Posterior vena cava (tissue), 2 donors: ENCODE measurements at regions of chr1 and their contacts with region 1.

Region 1: DNA sequence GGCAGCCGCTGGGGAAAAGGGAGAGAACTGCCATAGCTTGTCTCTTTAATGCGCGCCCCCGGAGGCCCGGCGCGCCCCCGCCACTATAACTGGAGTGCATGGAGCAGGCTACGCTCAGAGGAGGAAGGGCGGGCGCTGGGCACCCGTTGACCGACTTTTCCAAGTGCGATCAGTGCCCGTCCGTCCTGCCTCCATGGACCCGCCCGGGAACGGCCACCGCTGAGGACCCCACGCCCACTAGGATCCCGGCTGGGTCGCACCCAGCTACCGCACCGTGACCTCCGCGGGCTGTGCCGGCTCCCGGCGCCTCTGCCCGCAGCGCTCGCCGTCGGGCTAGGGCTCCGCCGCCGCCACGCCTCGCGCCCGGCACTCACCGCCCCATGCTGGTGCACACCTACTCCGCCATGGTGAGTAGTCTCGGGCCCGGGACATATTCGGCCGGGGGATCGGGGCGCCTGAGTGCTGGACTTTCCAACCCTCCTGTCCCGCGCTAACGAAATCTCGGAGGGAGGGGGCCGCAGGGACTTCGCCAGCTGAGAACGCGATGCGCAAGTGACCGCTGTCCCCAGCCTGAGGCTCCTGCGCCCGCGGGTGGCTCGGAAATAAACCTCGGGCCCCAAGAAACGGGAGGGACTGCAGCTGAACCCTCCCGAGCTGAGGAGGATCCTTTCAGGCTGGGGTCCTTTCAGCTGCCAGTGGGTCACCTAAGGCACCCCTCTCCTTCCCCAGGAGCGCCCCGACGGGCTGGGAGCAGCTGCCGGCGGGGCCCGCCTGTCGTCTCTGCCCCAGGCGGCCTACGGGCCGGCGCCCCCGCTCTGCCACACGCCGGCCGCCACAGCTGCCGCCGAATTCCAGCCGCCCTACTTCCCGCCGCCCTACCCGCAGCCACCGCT is at the start of gene TFAP2E:
- DNase-seq: peak; percentile 85
- total RNA-seq, gene TFAP2E: 0.65 to 0.81 TPM

Region 2: DNA sequence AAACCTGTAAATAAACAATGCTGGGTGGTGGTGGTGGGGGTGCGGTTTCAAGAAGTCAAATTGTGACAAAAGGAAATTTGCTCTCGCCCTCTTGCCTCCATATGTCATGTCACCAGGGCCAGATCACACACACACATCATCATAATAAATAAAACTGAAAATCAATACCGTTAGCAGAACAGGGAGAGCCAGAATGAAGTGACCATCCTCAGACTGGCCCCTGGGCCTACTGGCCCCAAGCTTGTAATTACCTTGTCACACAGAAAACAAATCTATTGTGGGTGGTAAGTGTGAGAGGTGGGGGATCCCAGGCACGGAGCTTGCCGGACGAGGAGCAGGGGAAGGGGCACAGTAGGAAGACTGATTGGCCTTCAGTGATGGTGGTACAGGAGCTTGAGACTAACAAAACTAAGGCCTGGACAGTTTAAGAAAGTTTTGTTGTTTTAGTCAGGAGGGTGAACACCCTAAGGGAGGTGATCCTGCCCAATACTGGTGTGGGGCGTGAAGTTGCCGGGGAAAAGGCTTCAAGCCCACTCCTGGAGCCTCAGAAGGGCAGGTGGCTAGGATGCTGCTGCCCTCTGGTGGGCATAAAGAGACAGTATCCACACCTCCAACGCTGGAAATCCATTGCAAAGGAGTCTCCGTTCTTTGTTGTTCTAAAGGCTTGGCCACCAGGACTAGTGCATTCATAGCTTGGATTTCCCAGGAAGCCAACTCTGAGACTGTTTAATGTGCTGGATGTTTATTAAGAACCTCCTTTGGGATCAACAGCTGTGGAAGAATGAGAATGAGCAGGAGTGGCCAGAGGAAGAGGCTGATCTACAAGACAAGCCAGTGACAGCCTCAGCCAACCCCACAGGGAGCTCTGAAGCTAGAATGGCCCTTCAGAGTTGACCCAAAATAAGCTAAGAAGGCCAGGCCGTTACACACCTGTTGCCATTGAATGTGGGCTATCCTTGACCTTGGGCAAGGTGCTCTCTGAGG is 153.3 kb after region 1 on chr1:
- intact Hi-C with region 1: loop called (anchors 5 kb)
- DNase-seq: no peak

Region 3: GRCh38 chr1:35763201-35763600 is 189.8 kb after region 1 on chr1:
- intact Hi-C with region 1: loop called in 1 of 2 experiments (anchors 1 kb)
- DNase-seq: no peak